ENCODE measurements at regions of chr15 and their contacts with region 1.

Region 1: GRCh38 chr15:33737687-33738601 is 230.4 kb upstream of the CHRM5 start:
- DNase-seq: peak; percentile 29 to 80
- ATAC-seq: peak; percentile 84 to 94
- H3K4me3 ChIP-seq: no peak overlapping the region
- H3K27ac ChIP-seq: no peak overlapping the region
- H3K4me1 ChIP-seq: no peaks in the 10 kb centered on the region
- CTCF ChIP-seq: peak; percentile 75
- EP300 ChIP-seq: no peak
- POLR2A ChIP-seq: no peak
- RAD21 ChIP-seq: peak; percentile 53 to 58

Region 2: GRCh38 chr15:33234014-33234461 is 503.9 kb before region 1 on chr15:
- CTCF ChIA-PET with region 1: interaction called, 60 read pairs
- POLR2A ChIA-PET with region 1: no interaction called
- DNase-seq: peak; percentile 55 to 65
- ATAC-seq: peak; percentile 84 to 93
- H3K4me3 ChIP-seq: no peak overlapping the region
- H3K27ac ChIP-seq: no peak overlapping the region
- H3K4me1 ChIP-seq: no peaks in the 10 kb centered on the region
- CTCF ChIP-seq: peak; percentile 87
- EP300 ChIP-seq: no peak
- POLR2A ChIP-seq: no peak
- RAD21 ChIP-seq: peak; percentile 90 to 95

Region 3: DNA sequence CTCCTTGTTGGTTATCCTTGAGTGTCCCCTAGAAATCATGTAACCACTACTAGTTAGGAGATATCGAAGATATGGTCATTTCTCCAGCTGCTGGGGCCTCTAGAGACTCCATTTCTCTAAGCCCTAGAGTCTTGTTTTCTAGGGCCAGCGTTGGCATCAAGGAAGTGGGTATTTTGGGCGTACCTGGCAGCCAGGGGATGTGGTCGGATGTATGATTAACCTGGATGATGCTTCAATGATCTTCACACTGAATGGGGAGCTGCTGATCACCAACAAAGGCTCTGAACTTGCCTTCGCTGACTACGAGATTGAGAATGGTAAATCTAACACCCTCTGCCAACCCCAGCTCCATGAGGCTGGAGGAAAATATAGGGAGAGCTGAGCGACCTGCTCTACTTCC is 101.7 kb before region 1 on chr15:
- CTCF ChIA-PET with region 1: no interaction called
- POLR2A ChIA-PET with region 1: no interaction called
- DNase-seq: no peak
- ATAC-seq: no peak
- H3K4me3 ChIP-seq: no peak overlapping the region
- H3K27ac ChIP-seq: no peak overlapping the region
- H3K4me1 ChIP-seq: no peaks in the 10 kb centered on the region
- CTCF ChIP-seq: no peak
- EP300 ChIP-seq: no peak
- POLR2A ChIP-seq: no peak
- RAD21 ChIP-seq: no peak

Region 4: DNA sequence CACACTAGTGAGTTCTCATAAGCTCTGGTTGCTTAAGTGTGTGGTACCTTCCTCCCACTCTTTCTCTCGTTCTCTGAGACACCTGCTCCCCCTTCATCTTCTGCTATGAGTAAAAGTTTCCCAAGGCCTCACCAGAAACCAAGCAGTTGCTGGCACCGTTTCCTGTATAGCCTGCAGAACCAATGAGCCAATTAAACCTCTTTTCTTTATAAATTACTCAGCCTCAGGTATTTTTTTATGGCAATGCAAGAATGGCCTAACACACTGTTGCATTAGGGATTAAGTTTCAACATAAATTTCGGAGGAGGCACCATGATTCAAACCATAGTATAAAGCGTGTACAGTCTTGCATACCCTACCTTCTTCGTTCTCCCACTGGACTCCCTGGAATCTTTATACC is 21.9 kb before region 1 on chr15:
- CTCF ChIA-PET with region 1: interaction called, 177 read pairs
- POLR2A ChIA-PET with region 1: no interaction called
- DNase-seq: no peak
- ATAC-seq: no peak
- H3K4me3 ChIP-seq: no peak overlapping the region
- H3K27ac ChIP-seq: no peak overlapping the region
- H3K4me1 ChIP-seq: peaks cover 2% of the 10 kb centered on the region; the same call in 1 of the 3 replicates
- CTCF ChIP-seq: no peak
- EP300 ChIP-seq: no peak
- POLR2A ChIP-seq: no peak
- RAD21 ChIP-seq: no peak

Region 5: DNA sequence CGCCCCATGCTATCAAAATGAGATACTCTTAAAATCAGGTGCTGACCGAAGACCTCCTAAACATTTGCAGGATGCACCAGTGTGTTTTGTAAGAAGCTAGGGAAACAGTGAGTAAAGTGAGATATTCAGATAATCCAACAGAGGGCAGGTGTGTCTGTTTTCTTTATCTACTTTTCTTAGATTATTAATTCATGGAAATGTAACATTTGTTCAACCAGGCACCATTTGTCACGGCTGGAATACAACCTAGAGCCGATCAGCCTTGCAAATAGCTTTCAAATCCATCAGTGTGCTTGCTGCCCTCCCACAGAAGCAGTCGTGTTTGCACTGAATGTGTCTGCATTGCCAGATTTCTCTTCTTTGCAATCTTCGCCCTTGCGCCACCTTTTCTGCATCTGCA is 28.4 kb after region 1 on chr15:
- CTCF ChIA-PET with region 1: interaction called, 16 read pairs
- POLR2A ChIA-PET with region 1: no interaction called
- DNase-seq: no peak
- ATAC-seq: peak; percentile 57 to 66; a peak in 3 of 6 replicates
- H3K4me3 ChIP-seq: no peak overlapping the region
- H3K27ac ChIP-seq: no peak overlapping the region
- H3K4me1 ChIP-seq: no peaks in the 10 kb centered on the region
- CTCF ChIP-seq: 0 out of 3 replicates have a peak, but pooled peaks have one; percentile 17
- EP300 ChIP-seq: no peak
- POLR2A ChIP-seq: no peak
- RAD21 ChIP-seq: no peak

Region 6: GRCh38 chr15:33975022-33975565 is 237.2 kb after region 1 on chr15:
- CTCF ChIA-PET with region 1: interaction called, 27 read pairs
- POLR2A ChIA-PET with region 1: no interaction called
- DNase-seq: peak in 1 of 2 experiments; percentile 14
- ATAC-seq: peak; percentile 44 to 73; a peak in 5 of 6 replicates
- H3K4me3 ChIP-seq: no peak overlapping the region
- H3K27ac ChIP-seq: no peak overlapping the region
- H3K4me1 ChIP-seq: no peaks in the 10 kb centered on the region
- CTCF ChIP-seq: peak; percentile 28; the same call in 2 of the 3 replicates
- EP300 ChIP-seq: no peak
- POLR2A ChIP-seq: no peak
- RAD21 ChIP-seq: 0 out of 5 replicates have a peak, but pooled peaks of 1 of the 2 experiments have one; percentile 34